K562 (cell line): ENCODE measurements at regions of chr12 and their contacts with region 1.

Region 1: DNA sequence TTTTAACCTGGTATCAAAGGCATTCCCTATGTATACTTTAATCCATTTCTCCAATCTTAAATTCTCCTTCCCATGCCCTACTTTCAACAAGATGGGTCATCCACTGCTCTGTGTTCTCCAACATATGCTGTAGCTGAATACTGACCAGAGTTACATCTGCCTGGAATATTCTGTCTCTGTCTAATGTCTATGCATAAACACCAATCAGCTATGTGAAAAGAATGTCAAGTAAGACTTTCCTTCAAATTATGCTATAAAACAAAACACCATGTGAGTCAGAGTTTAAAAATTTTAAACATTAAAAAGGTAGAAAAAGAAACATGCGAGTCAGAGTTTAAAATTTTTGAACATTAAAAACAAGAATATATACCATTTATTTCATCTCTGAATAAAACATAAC is 19.3 kb downstream of the NT5DC3 start:
- DNase-seq: no peak
- ATAC-seq: no peak
- H3K4me3 ChIP-seq: no peak overlapping the region
- H3K27ac ChIP-seq: no peak overlapping the region
- H3K4me1 ChIP-seq: no peaks in the 10 kb centered on the region
- H3K27me3 ChIP-seq: no peaks in the 10 kb centered on the region
- CTCF ChIP-seq: no peak
- EP300 ChIP-seq: no peak
- POLR2A ChIP-seq: no peak
- RAD21 ChIP-seq: no peak

Region 2: GRCh38 chr12:103751171-103751570 is 70.6 kb before region 1 on chr12:
- CTCF ChIA-PET with region 1: no interaction called
- POLR2A ChIA-PET with region 1: no interaction called
- in situ Hi-C with region 1: no loop called
- intact Hi-C with region 1: no loop called
- DNase-seq: peak; percentile 23 to 34 (median 28)
- ATAC-seq: peak; percentile 86
- H3K4me3 ChIP-seq: no peak overlapping the region
- H3K27ac ChIP-seq: no peak overlapping the region
- H3K4me1 ChIP-seq: no peaks in the 10 kb centered on the region
- H3K27me3 ChIP-seq: peaks cover 9 to 21% of the 10 kb centered on the region in 2 experiments; a peak in 4 of 5 replicates
- CTCF ChIP-seq: peak; percentile 30 to 54 (median 36); a peak in 5 of 6 replicates
- EP300 ChIP-seq: no peak
- POLR2A ChIP-seq: no peak
- RAD21 ChIP-seq: 0 out of 4 replicates have a peak, but pooled peaks of 1 of the 2 experiments have one; percentile 11

Region 3: GRCh38 chr12:103833891-103834290 is 12.1 kb after region 1 on chr12:
- CTCF ChIA-PET with region 1: no interaction called
- POLR2A ChIA-PET with region 1: interaction called, 18 read pairs
- in situ Hi-C with region 1: no loop called
- intact Hi-C with region 1: no loop called
- DNase-seq: peak in 2 of 4 experiments; percentile 24 to 38
- ATAC-seq: peak; percentile 76
- H3K4me3 ChIP-seq: peak overlapping the region; percentile 14; the same call in 1 of the 2 replicates
- H3K27ac ChIP-seq: no peak overlapping the region
- H3K4me1 ChIP-seq: peaks cover 2 to 6% of the 10 kb centered on the region in 2 experiments; a peak in 3 of 5 replicates
- H3K27me3 ChIP-seq: no peaks in the 10 kb centered on the region
- CTCF ChIP-seq: peak in 2 of 3 experiments; percentile 27 to 47; a peak in 2 of 6 replicates
- EP300 ChIP-seq: no peak
- POLR2A ChIP-seq: no peak
- RAD21 ChIP-seq: no peak; a peak in 1 of 4 replicates